Posterior vena cava (tissue), 2 donors: ENCODE measurements at regions of chr14 and their contacts with region 1.

Region 1: GRCh38 chr14:50025776-50026175 is 90.6 kb downstream of the VCPKMT start:
- DNase-seq: no peak

Region 2: DNA sequence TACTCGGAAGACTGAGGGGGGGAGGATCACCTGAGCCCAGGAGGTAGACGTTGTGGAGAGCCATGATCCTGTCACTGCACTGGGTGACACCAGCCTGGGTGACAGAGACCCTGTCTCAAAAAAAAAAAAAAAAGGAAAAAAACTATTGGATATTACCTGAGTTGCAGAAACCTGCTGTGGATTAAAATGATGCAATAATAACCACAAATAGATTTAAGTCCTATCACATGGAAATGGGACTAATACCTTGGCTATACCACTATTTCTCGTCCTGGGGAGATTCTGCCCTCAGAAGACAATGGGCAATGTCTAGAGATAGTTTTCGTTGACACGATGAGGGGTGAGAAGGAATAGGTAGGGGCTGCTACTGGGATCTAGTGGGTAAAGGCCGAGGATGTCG is 240.0 kb before region 1 on chr14:
- intact Hi-C with region 1: no loop called
- DNase-seq: no peak

Region 3: GRCh38 chr14:50013559-50014333 is 12.0 kb before region 1 on chr14:
- intact Hi-C with region 1: loop called in 1 of 2 experiments (anchors 1 kb)
- DNase-seq: no peak